Activated CD8-positive, alpha-beta T cell treated with anti-CD3 and anti-CD28 coated beads for 36 hours (primary cell): ENCODE measurements at regions of chr21 and their contacts with region 1.

Region 1: DNA sequence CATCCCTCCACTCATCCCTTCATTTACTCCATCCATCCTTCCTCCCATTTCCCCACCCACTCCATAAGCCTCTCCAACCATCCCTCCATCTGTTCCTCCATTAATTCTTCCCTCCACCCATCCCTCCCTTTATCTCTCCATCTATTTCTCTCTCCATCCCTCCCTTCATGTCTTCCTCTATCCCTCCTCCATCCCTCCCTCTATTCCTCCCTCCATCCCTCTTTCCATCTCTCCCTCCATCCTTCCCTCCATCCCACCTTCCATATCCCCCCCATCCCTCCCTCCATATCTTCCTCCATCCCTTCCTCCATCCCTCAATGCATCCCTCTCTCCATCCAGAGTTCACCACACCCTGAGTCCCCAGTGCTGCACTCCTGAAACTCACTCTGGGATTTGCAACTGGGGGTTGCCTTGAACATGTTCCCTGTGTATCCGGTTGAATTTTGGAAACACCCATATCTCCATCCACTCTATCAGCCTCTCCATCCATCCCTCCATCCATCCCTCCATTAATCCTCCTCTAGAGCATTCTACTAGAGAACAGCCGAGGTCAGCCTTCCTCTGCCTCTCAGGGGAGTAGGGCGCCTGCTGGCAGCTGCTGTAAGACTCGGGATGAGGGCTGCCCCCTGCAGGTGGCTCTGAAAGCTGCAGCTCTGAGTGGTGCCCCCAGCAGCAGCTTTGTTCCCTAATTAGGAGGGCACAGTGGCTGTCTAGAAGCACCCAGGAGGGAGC is 39.4 kb downstream of the ABCG1 start:
- DNase-seq: peak; percentile 89
- ATAC-seq: peak; percentile 99
- H3K4me3 Mint-ChIP-seq: no peak overlapping the region
- H3K27ac Mint-ChIP-seq: no peak overlapping the region
- H3K4me1 Mint-ChIP-seq: peaks cover 17% of the 10 kb centered on the region
- H3K27me3 Mint-ChIP-seq: no peaks in the 10 kb centered on the region
- CTCF ChIP-seq: peak; percentile 89

Region 2: GRCh38 chr21:42156690-42157577 is 101.4 kb before region 1 on chr21:
- CTCF ChIA-PET with region 1: interaction called, 20 read pairs
- POLR2A ChIA-PET with region 1: interaction called, 3 read pairs
- intact Hi-C with region 1: no loop called
- DNase-seq: no peak
- ATAC-seq: no peak
- H3K4me3 Mint-ChIP-seq: no peak overlapping the region
- H3K27ac Mint-ChIP-seq: no peak overlapping the region
- H3K4me1 Mint-ChIP-seq: peaks cover 22% of the 10 kb centered on the region
- H3K27me3 Mint-ChIP-seq: no peaks in the 10 kb centered on the region
- CTCF ChIP-seq: no peak

Region 3: GRCh38 chr21:42187976-42188653 is 70.2 kb before region 1 on chr21:
- CTCF ChIA-PET with region 1: interaction called, 12 read pairs
- POLR2A ChIA-PET with region 1: no interaction called
- intact Hi-C with region 1: no loop called
- DNase-seq: peak; percentile 94
- ATAC-seq: peak; percentile 90
- H3K4me3 Mint-ChIP-seq: peak overlapping the region; percentile 62
- H3K27ac Mint-ChIP-seq: peak overlapping the region; percentile 95
- H3K4me1 Mint-ChIP-seq: peaks cover 67% of the 10 kb centered on the region
- H3K27me3 Mint-ChIP-seq: no peaks in the 10 kb centered on the region
- CTCF ChIP-seq: no peak

Region 4: DNA sequence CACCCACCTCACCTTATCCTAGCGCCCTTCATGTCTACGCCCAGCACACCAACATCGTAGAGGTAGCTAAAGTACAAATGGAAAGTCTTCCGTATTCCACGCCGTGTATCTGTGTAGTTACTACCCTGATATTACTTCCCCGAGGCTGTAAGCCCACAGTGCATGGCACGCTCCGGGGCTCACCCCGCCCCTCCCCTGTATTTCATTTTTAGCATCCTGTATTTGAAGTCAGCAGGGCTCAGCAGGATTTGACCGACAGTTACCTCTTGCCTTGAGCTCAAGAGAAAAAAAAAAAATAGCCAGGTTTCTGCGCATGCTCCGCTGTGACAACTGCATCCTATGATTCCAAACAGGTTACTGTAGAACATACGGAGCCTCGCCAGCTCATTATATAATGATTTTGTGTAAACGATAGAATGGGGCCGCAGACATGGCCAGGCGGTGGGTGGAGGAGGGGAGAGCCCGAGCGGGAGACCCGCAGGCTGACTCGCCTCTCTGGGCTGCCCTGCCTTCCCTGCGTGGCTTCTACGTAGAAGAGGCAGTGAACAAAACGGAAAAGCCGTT is 38.1 kb before region 1 on chr21:
- CTCF ChIA-PET with region 1: interaction called, 14 read pairs
- POLR2A ChIA-PET with region 1: interaction called, 4 read pairs
- intact Hi-C with region 1: no loop called
- DNase-seq: peak; percentile 84
- ATAC-seq: peak; percentile 84
- H3K4me3 Mint-ChIP-seq: peak overlapping the region; percentile 85
- H3K27ac Mint-ChIP-seq: peak overlapping the region; percentile 91
- H3K4me1 Mint-ChIP-seq: peaks cover 20% of the 10 kb centered on the region
- H3K27me3 Mint-ChIP-seq: no peaks in the 10 kb centered on the region
- CTCF ChIP-seq: no peak

Region 5: DNA sequence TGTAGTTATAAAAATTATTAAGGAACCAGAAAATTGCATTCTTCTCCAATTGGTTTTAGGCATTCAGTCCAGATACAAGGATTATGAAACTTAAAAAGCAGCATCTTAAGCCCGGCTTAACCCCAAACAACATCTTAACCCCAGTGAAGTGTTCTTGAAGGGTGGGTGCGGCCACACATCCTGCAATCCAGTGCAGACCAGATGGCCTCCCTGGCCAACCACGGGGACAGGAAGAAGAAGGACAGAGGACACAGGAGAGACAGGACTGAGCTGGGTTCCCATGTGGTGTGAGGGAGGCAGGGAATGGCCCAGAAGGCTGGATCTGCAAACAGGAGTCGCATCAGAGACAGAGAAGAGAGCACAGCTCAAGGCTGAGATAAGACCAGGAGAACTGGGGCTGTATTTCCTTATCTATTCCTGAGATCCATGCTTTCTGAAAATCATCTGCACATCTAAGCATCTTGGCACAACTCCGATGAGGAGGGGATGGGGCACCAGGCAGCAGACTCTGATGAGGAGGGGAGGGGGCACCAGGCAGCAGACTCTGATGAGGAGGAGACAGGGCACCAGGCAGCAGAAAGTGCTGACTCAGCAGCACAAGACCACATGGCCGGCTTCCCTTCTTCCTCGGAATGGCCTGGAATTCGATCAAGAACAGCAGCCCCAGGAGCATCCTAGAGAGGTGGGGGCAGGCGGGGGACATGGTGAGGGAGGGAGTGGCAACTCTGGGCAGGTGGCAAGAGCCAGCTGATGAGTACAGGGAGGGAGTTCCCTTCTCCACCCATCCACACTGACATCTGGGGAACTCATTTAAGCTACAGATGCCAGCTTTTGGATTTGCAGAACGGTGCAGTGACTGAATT is 12.8 kb before region 1 on chr21:
- CTCF ChIA-PET with region 1: interaction called, 22 read pairs
- POLR2A ChIA-PET with region 1: no interaction called
- intact Hi-C with region 1: no loop called
- DNase-seq: no peak
- ATAC-seq: no peak
- H3K4me3 Mint-ChIP-seq: no peak overlapping the region
- H3K27ac Mint-ChIP-seq: no peak overlapping the region
- H3K4me1 Mint-ChIP-seq: peaks cover 9% of the 10 kb centered on the region
- H3K27me3 Mint-ChIP-seq: no peaks in the 10 kb centered on the region
- CTCF ChIP-seq: no peak

Region 6: GRCh38 chr21:42319376-42319775 is 61.1 kb after region 1 on chr21:
- CTCF ChIA-PET with region 1: no interaction called
- POLR2A ChIA-PET with region 1: no interaction called
- intact Hi-C with region 1: no loop called
- DNase-seq: peak; percentile 24
- ATAC-seq: peak; percentile 76
- H3K4me3 Mint-ChIP-seq: no peak overlapping the region
- H3K27ac Mint-ChIP-seq: peak overlapping the region; percentile 24
- H3K4me1 Mint-ChIP-seq: peaks cover 5% of the 10 kb centered on the region
- H3K27me3 Mint-ChIP-seq: peaks cover 4% of the 10 kb centered on the region
- CTCF ChIP-seq: no peak

Region 7: GRCh38 chr21:42456457-42456856 is 198.1 kb after region 1 on chr21:
- CTCF ChIA-PET with region 1: no interaction called
- POLR2A ChIA-PET with region 1: no interaction called
- intact Hi-C with region 1: no loop called
- DNase-seq: peak; percentile 75
- ATAC-seq: peak; percentile 94
- H3K4me3 Mint-ChIP-seq: no peak overlapping the region
- H3K27ac Mint-ChIP-seq: peak overlapping the region; percentile 62
- H3K4me1 Mint-ChIP-seq: peaks cover 39% of the 10 kb centered on the region
- H3K27me3 Mint-ChIP-seq: no peaks in the 10 kb centered on the region
- CTCF ChIP-seq: no peak